ENCODE measurements at regions of chr9 and their contacts with region 1.

Region 1: GRCh38 chr9:37119907-37120842 is at the start of gene ZCCHC7:
- DNase-seq: peak; percentile 93
- ATAC-seq: peak; percentile 94
- H3K4me3 Mint-ChIP-seq: peak within 1 kb of the TSS; percentile 99
- H3K27ac Mint-ChIP-seq: peak within 1 kb of the TSS; percentile 96
- H3K4me1 Mint-ChIP-seq: peaks cover 46% of the 10 kb centered on the region
- H3K27me3 Mint-ChIP-seq: no peaks in the 10 kb centered on the region
- CTCF ChIP-seq: no peak
- total RNA-seq, gene ZCCHC7: 70.3 and 70.8 TPM in 2 replicates

Region 2: GRCh38 chr9:36738318-36738976 is 381.7 kb before region 1 on chr9:
- CTCF ChIA-PET with region 1: no interaction called
- POLR2A ChIA-PET with region 1: no interaction called
- intact Hi-C with region 1: no loop called
- DNase-seq: no peak
- ATAC-seq: no peak
- H3K4me3 Mint-ChIP-seq: no peak overlapping the region
- H3K27ac Mint-ChIP-seq: no peak overlapping the region
- H3K4me1 Mint-ChIP-seq: peaks cover 9% of the 10 kb centered on the region
- H3K27me3 Mint-ChIP-seq: peaks cover 30% of the 10 kb centered on the region
- CTCF ChIP-seq: no peak

Region 3: GRCh38 chr9:36995927-36996705 is 124.1 kb before region 1 on chr9:
- CTCF ChIA-PET with region 1: interaction called, 4 read pairs
- POLR2A ChIA-PET with region 1: interaction called, 13 read pairs
- intact Hi-C with region 1: no loop called
- DNase-seq: peak; percentile 56
- ATAC-seq: peak; percentile 29
- H3K4me3 Mint-ChIP-seq: peak overlapping the region; percentile 47
- H3K27ac Mint-ChIP-seq: peak overlapping the region; percentile 97
- H3K4me1 Mint-ChIP-seq: peaks cover 96% of the 10 kb centered on the region
- H3K27me3 Mint-ChIP-seq: no peaks in the 10 kb centered on the region
- CTCF ChIP-seq: no peak

Region 4: DNA sequence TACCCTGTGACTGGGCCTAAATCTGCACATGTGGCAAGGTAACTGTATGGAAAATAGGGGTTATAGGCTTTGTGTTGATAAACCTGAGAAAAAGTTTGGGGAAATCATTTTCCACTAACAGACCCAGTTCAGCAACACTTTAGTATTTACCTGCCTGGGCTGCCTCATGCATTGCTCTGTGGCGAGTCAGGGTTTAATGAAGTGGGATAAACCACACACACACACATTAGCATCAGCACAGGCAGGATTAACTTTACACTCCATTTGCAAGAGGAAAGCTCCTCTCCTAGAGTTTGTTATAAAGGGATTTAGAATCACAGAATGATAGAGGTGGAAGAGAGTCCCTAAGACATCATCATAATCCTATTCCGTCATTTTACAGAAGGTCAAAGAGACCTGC is 19.8 kb before region 1 on chr9:
- CTCF ChIA-PET with region 1: no interaction called
- POLR2A ChIA-PET with region 1: interaction called, 10 read pairs
- intact Hi-C with region 1: loop called (anchors 2 kb)
- DNase-seq: no peak
- ATAC-seq: no peak
- H3K4me3 Mint-ChIP-seq: peak overlapping the region; percentile 24
- H3K27ac Mint-ChIP-seq: peak overlapping the region; percentile 77
- H3K4me1 Mint-ChIP-seq: peaks cover 44% of the 10 kb centered on the region
- H3K27me3 Mint-ChIP-seq: no peaks in the 10 kb centered on the region
- CTCF ChIP-seq: no peak

Region 5: DNA sequence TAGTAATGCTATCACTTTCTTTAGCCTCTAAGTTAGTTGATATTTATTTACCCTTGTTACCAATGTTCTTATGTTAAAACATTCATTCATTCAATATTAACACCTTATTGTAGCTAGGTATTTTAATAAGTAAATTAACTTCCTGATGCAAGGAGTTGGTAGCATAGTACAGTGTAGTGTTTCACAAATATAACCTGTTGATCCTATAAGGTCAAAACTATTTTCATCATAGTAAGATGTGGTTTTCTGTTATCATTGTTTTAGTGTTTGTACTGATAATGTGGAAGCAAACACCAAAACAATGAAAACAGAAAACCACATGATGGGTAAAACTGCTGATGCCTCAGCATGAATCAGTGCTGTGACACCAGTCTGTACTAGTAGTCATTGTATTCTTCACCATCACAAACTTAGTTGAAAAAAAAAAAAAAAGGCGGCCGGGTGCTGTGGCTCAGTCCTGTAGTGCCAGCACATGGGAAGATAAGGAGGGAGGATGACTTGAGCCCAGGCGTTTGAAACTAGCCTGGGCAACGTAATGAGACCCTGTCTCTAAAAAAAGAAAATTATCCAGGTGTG is 36.7 kb after region 1 on chr9:
- CTCF ChIA-PET with region 1: no interaction called
- POLR2A ChIA-PET with region 1: interaction called, 3 read pairs
- intact Hi-C with region 1: loop called (anchors 5 kb)
- DNase-seq: no peak
- ATAC-seq: no peak
- H3K4me3 Mint-ChIP-seq: no peak overlapping the region
- H3K27ac Mint-ChIP-seq: peak overlapping the region; percentile 41
- H3K4me1 Mint-ChIP-seq: peaks cover 44% of the 10 kb centered on the region
- H3K27me3 Mint-ChIP-seq: no peaks in the 10 kb centered on the region
- CTCF ChIP-seq: no peak

Region 6: DNA sequence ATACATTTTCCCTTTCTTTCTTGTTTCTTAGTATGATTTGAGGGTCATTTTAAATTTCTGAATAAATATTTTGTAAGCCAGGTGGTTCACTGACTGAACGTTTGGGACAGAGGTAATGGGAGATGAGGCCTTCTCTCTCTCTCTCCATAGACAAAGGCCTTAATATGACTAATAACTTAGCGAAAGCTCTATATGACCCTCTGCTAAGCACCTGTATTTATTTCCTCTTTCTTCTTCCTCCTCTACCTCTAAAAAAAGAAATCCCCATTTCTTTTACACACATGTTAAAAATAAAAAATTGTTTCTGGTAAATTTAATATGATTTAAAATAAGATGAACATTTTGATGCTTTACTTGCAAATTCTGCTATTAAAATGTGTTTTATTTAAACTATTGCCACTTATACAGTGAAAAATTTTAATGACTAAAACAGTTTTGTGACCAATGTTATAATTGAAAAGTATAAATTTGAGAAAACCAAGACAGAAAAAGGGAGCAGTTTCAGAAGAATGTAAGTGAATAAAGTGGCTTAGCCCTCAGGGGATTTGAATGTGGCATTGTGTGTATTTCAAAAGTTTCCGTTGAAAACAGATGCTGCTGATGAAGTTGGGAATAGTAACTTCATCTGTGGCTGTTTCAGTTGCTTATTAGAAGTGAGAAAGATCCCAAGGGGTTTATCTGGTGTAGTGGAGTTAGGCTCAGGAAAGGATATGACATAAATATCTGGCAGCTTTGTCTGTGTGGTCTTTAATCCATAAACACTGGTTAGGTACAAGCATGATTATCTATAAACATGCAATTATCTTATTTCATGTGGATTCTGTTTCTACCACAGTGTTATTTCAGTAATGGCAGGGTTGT is 173.7 kb after region 1 on chr9:
- CTCF ChIA-PET with region 1: no interaction called
- POLR2A ChIA-PET with region 1: interaction called, 10 read pairs
- intact Hi-C with region 1: no loop called
- DNase-seq: no peak
- ATAC-seq: peak; percentile 69
- H3K4me3 Mint-ChIP-seq: peak overlapping the region; percentile 67
- H3K27ac Mint-ChIP-seq: peak overlapping the region; percentile 97
- H3K4me1 Mint-ChIP-seq: peaks cover 95% of the 10 kb centered on the region
- H3K27me3 Mint-ChIP-seq: no peaks in the 10 kb centered on the region
- CTCF ChIP-seq: no peak

Region 7: DNA sequence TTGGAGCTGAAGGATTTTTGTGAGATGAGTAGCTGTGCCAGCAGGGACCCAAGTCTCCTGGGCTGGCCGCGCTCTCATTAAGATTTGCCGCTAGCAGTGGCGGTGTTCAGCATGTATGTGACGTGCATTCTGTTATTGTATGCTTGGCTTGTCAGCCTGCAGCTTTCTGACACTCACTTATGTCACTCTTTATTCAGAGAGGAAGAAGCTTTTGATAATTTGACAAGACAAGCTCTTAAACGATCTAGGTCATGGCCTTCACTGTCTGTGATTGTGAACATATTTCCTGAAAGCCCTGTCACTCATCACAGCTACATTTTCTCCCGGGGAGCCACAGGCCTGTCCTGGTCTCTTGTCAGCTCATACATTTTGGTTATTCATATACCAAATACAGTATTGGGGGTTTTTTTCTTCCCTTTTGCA is 204.1 kb after region 1 on chr9:
- CTCF ChIA-PET with region 1: interaction called, 5 read pairs
- POLR2A ChIA-PET with region 1: interaction called, 36 read pairs
- intact Hi-C with region 1: loop called (anchors 1 kb)
- DNase-seq: peak; percentile 42
- ATAC-seq: peak; percentile 86
- H3K4me3 Mint-ChIP-seq: peak overlapping the region; percentile 59
- H3K27ac Mint-ChIP-seq: peak overlapping the region; percentile 99
- H3K4me1 Mint-ChIP-seq: peaks cover 69% of the 10 kb centered on the region
- H3K27me3 Mint-ChIP-seq: no peaks in the 10 kb centered on the region
- CTCF ChIP-seq: no peak

Region 8: DNA sequence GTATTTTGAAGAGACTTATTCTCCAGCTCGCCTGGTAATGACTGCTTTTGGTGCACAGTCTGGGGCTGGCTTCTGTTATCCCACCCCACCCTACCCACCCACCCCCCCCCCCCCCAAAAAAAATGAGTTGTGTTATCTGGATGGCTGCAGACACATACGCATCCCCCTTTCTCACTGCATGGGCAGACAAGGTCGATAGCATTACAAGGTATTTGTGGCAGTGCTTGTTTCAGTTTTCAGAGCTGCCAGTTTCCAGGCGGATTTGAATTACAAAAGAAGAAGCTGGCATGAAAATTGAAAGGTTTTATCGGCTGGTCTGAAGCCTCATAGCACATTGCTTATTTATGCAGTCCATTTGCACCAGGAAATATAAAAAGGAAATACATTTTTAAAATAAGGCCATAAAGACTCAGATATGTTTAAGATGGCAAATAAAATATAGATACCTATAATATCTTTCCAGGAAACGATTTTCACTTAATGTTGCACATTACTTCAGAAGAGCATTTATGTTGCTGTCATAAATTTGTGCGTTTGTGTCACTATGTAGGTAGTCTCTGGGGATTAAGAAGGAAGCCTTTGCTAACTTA is 217.2 kb after region 1 on chr9:
- CTCF ChIA-PET with region 1: no interaction called
- POLR2A ChIA-PET with region 1: interaction called, 14 read pairs
- intact Hi-C with region 1: no loop called
- DNase-seq: no peak
- ATAC-seq: peak; percentile 50
- H3K4me3 Mint-ChIP-seq: peak overlapping the region; percentile 71
- H3K27ac Mint-ChIP-seq: peak overlapping the region; percentile 94
- H3K4me1 Mint-ChIP-seq: peaks cover 73% of the 10 kb centered on the region
- H3K27me3 Mint-ChIP-seq: no peaks in the 10 kb centered on the region
- CTCF ChIP-seq: no peak